Activated T-helper 1 cell treated with anti-CD3 and anti-CD28 coated beads, Interleukin-12 subunit alpha, Interleukin-12 subunit beta, Interleukin-2, Interleukin-4 antibody, amounts not matched to agents 30 ng/mL and 10 ng/mL and 1 ng/mL, durations not matched to agents 14 hours and 24 hours and 36 hours (primary cell): ENCODE measurements at regions of chr22 and their contacts with region 1.

Region 1: DNA sequence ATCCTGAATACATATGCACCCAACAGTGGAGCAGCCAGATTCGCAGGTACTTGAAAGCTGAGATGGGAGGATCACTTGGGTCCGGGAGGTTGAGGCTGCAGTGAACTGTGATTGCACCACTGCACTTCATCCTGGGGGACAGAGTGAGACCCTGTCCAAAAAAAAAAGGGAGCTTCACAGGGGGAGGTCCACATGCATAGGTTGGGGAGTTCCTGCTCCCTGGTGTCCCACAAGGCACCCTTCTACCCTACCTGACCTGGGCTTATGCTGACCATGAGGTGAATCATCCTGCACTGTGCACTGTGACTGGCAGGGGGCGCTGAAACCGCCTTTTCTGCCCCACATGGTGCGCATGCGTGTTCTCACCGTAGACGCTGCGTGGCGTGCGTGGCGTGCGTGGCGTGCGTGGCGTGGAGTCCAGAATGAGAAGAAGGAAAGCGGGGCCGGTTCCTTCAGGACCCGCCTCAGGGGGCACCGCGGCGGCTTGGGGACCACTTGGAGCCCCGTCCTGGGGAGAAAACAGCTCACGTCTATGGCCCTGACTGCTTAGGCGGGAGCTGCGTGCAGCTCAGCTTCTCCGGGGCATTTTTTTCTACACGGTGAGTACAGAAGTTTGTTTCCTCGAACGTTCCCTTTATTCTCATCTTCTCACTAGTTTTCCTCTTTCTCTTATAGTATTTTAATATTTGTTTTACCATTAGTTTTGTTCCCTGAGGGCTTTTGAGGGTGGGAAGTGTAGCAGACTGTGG is 116.6 kb upstream of the GRK3 start:
- DNase-seq: peak; percentile 83
- H3K4me3 Mint-ChIP-seq: peak overlapping the region; percentile 95
- H3K27ac Mint-ChIP-seq: peak overlapping the region; percentile 94
- H3K4me1 Mint-ChIP-seq: peaks cover 38% of the 10 kb centered on the region
- H3K27me3 Mint-ChIP-seq: no peaks in the 10 kb centered on the region

Region 2: GRCh38 chr22:25202290-25202921 is 245.5 kb before region 1 on chr22:
- intact Hi-C with region 1: loop called (anchors 5 kb)
- DNase-seq: peak; percentile 24
- H3K4me3 Mint-ChIP-seq: no peak overlapping the region
- H3K27ac Mint-ChIP-seq: no peak overlapping the region
- H3K4me1 Mint-ChIP-seq: peaks cover 6% of the 10 kb centered on the region
- H3K27me3 Mint-ChIP-seq: no peaks in the 10 kb centered on the region

Region 3: GRCh38 chr22:25404928-25405816 is 42.7 kb before region 1 on chr22:
- intact Hi-C with region 1: loop called (anchors 1 kb)
- DNase-seq: peak; percentile 73
- H3K4me3 Mint-ChIP-seq: peak overlapping the region; percentile 84
- H3K27ac Mint-ChIP-seq: no peak overlapping the region
- H3K4me1 Mint-ChIP-seq: peaks cover 32% of the 10 kb centered on the region
- H3K27me3 Mint-ChIP-seq: peaks cover 4% of the 10 kb centered on the region

Region 4: GRCh38 chr22:25461301-25461700 is 13.4 kb after region 1 on chr22:
- intact Hi-C with region 1: no loop called
- DNase-seq: no peak
- H3K4me3 Mint-ChIP-seq: no peak overlapping the region
- H3K27ac Mint-ChIP-seq: peak overlapping the region; percentile 13
- H3K4me1 Mint-ChIP-seq: peaks cover 27% of the 10 kb centered on the region
- H3K27me3 Mint-ChIP-seq: no peaks in the 10 kb centered on the region

Region 5: GRCh38 chr22:25702040-25702439 is 254.2 kb after region 1 on chr22:
- intact Hi-C with region 1: loop called (anchors 2 kb)
- DNase-seq: no peak
- H3K4me3 Mint-ChIP-seq: peak overlapping the region; percentile 75
- H3K27ac Mint-ChIP-seq: peak overlapping the region; percentile 36
- H3K4me1 Mint-ChIP-seq: peaks cover 68% of the 10 kb centered on the region
- H3K27me3 Mint-ChIP-seq: no peaks in the 10 kb centered on the region